ENCODE measurements at regions of chr5 and their contacts with region 1.

Region 1: DNA sequence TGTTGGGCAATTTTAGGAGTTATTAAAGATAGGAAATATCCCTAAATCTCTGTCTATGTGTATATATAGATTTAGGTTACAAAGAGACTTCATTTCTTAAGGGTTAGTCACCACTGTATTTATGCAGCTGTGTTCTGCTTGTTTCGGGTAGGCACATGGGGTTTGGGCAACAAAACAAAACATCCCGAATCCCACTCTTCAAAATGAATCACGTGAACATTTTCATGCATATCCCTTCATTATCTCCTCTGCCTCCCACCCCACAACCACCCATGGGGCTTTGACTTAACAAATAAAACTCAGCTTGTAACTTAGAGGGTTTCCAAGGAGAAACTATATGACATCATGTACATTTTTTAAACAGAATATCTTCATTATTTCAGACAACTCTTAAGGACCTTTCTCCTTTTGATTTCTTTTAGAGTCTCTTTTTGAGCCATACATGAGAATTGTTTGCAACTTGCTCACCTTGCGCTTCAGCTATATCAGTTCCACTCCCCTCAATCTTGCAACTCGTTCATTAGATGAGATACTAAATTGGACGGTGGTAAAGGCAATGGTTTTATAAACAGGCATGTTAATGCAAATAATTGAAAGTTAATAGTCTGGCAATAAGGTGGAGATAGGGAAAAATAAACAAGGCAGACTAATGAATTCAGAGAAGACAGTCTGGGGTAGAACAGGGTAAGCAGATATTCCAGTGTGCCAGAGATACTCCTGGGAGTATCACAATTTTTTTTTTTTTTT is 136.7 kb downstream of the CD180 start:
- DNase-seq: peak; percentile 82
- H3K4me3 ChIP-seq: peak overlapping the region in 1 of 3 experiments; percentile 30
- H3K27ac ChIP-seq: peak overlapping the region; percentile 89
- H3K4me1 ChIP-seq: peaks cover 68% of the 10 kb centered on the region
- H3K27me3 ChIP-seq: no peaks in the 10 kb centered on the region
- CTCF ChIP-seq: no peak
- POLR2A ChIP-seq: no peak

Region 2: GRCh38 chr5:66850324-66851061 is 209.4 kb before region 1 on chr5:
- CTCF ChIA-PET with region 1: no interaction called
- POLR2A ChIA-PET with region 1: no interaction called
- dilution Hi-C with region 1: no loop called
- intact Hi-C with region 1: no loop called
- DNase-seq: no peak
- H3K4me3 ChIP-seq: no peak overlapping the region
- H3K27ac ChIP-seq: peak overlapping the region; percentile 78
- H3K4me1 ChIP-seq: peaks cover 39% of the 10 kb centered on the region
- H3K27me3 ChIP-seq: no peaks in the 10 kb centered on the region
- CTCF ChIP-seq: no peak
- POLR2A ChIP-seq: no peak

Region 3: GRCh38 chr5:67038817-67039603 is 20.9 kb before region 1 on chr5:
- CTCF ChIA-PET with region 1: interaction called, 8 read pairs
- POLR2A ChIA-PET with region 1: no interaction called
- dilution Hi-C with region 1: no loop called
- intact Hi-C with region 1: loop called (anchors 1 kb)
- DNase-seq: peak; percentile 85
- H3K4me3 ChIP-seq: no peak overlapping the region
- H3K27ac ChIP-seq: peak overlapping the region; percentile 65
- H3K4me1 ChIP-seq: peaks cover 46% of the 10 kb centered on the region
- H3K27me3 ChIP-seq: no peaks in the 10 kb centered on the region
- CTCF ChIP-seq: no peak
- POLR2A ChIP-seq: no peak

Measured in endothelial cell of umbilical vein (primary cell).